Caco-2 (cell line): ENCODE measurements at regions of chr10 and their contacts with region 1.

Region 1: GRCh38 chr10:61937631-61938351 is 36.3 kb downstream of the ARID5B start:
- DNase-seq: peak; percentile 78 to 90
- H3K4me3 ChIP-seq: no peak overlapping the region
- H3K4me3 Mint-ChIP-seq: peak overlapping the region; percentile 37
- H3K27ac Mint-ChIP-seq: peak overlapping the region; percentile 33
- H3K4me1 ChIP-seq: peaks cover 88% of the 10 kb centered on the region
- H3K4me1 Mint-ChIP-seq: peaks cover 73% of the 10 kb centered on the region
- H3K27me3 ChIP-seq: no peaks in the 10 kb centered on the region
- H3K27me3 Mint-ChIP-seq: no peaks in the 10 kb centered on the region
- CTCF ChIP-seq: no peak

Region 2: DNA sequence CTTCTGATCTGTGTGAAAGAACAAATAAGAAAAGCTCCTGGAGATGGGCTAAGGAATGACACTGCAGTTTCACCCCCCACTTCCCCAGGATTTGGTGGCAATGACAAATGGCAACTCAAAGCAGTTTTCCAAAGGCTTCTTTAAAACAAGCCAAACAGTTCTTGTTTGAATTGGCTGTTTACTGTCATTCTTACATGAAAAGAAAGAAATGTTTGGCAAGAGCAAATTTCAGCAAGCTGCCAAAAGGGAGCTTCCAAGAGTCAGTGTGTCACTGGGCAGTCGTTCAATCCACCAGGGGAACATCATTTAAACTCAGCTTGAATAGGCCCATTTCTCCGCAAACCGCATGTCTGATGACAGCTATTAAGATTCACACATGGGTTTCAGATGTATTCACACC is 874.8 kb before region 1 on chr10:
- CTCF ChIA-PET with region 1: no interaction called
- POLR2A ChIA-PET with region 1: no interaction called
- intact Hi-C with region 1: loop called (anchors 10 kb)
- DNase-seq: peak; percentile 53 to 63
- H3K4me3 ChIP-seq: no peak overlapping the region
- H3K4me3 Mint-ChIP-seq: no peak overlapping the region
- H3K27ac Mint-ChIP-seq: no peak overlapping the region
- H3K4me1 ChIP-seq: peaks cover 47% of the 10 kb centered on the region
- H3K4me1 Mint-ChIP-seq: peaks cover 11% of the 10 kb centered on the region
- H3K27me3 ChIP-seq: no peaks in the 10 kb centered on the region
- H3K27me3 Mint-ChIP-seq: peaks cover 14% of the 10 kb centered on the region
- CTCF ChIP-seq: no peak

Region 3: GRCh38 chr10:61903221-61903927 is 34.4 kb before region 1 on chr10:
- CTCF ChIA-PET with region 1: interaction called, 7 read pairs
- POLR2A ChIA-PET with region 1: interaction called, 12 read pairs
- intact Hi-C with region 1: loop called (anchors 1 kb)
- DNase-seq: peak in 1 of 2 experiments; percentile 84
- H3K4me3 ChIP-seq: peak overlapping the region; percentile 97
- H3K4me3 Mint-ChIP-seq: peak overlapping the region; percentile 89
- H3K27ac Mint-ChIP-seq: peak overlapping the region; percentile 99
- H3K4me1 ChIP-seq: peaks cover 57% of the 10 kb centered on the region
- H3K4me1 Mint-ChIP-seq: peaks cover 34% of the 10 kb centered on the region
- H3K27me3 ChIP-seq: no peaks in the 10 kb centered on the region
- H3K27me3 Mint-ChIP-seq: no peaks in the 10 kb centered on the region
- CTCF ChIP-seq: peak; percentile 14 to 16

Region 4: GRCh38 chr10:61923213-61923949 is 14.4 kb before region 1 on chr10:
- CTCF ChIA-PET with region 1: interaction called, 3 read pairs
- POLR2A ChIA-PET with region 1: interaction called, 16 read pairs
- intact Hi-C with region 1: loop called (anchors 1 kb)
- DNase-seq: no peak
- H3K4me3 ChIP-seq: no peak overlapping the region
- H3K4me3 Mint-ChIP-seq: no peak overlapping the region
- H3K27ac Mint-ChIP-seq: peak overlapping the region; percentile 12
- H3K4me1 ChIP-seq: peaks cover 20% of the 10 kb centered on the region
- H3K4me1 Mint-ChIP-seq: peaks cover 43% of the 10 kb centered on the region
- H3K27me3 ChIP-seq: no peaks in the 10 kb centered on the region
- H3K27me3 Mint-ChIP-seq: no peaks in the 10 kb centered on the region
- CTCF ChIP-seq: no peak

Region 5: DNA sequence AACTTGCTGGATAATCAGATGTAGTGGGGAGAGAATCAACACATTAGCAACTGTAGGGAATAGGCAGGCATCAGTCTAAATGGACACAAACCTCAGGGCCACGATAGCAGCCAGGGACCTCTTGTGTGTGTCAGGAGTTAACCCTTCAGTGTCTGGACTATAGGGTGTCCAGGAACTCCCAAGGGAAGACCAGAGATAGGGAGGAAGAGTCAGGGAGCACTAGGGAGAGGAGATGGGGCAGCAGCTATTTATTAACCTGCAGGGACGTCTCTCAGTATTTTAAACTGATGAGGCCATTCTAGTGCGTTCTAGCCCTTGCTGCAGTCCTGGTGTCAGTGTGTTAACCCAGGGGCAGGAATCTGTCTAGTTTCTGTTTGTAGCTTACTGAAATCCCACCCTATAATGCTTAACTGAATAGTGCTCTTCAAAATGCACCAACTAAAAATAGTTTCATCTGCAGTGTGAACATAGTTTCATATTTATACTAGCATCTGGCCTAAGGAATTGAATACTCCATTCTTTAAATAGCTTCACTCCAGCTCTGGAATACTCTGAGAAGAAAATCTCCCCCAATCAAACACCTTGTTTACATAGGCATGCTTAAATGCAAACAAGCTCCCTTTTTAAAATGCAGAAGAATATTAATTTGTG is 26.4 kb after region 1 on chr10:
- CTCF ChIA-PET with region 1: no interaction called
- POLR2A ChIA-PET with region 1: interaction called, 8 read pairs
- intact Hi-C with region 1: loop called (anchors 1 kb)
- DNase-seq: peak; percentile 53 to 57
- H3K4me3 ChIP-seq: no peak overlapping the region
- H3K4me3 Mint-ChIP-seq: peak overlapping the region; percentile 51
- H3K27ac Mint-ChIP-seq: peak overlapping the region; percentile 84
- H3K4me1 ChIP-seq: peaks cover 78% of the 10 kb centered on the region
- H3K4me1 Mint-ChIP-seq: peaks cover 75% of the 10 kb centered on the region
- H3K27me3 ChIP-seq: no peaks in the 10 kb centered on the region
- H3K27me3 Mint-ChIP-seq: no peaks in the 10 kb centered on the region
- CTCF ChIP-seq: no peak

Region 6: DNA sequence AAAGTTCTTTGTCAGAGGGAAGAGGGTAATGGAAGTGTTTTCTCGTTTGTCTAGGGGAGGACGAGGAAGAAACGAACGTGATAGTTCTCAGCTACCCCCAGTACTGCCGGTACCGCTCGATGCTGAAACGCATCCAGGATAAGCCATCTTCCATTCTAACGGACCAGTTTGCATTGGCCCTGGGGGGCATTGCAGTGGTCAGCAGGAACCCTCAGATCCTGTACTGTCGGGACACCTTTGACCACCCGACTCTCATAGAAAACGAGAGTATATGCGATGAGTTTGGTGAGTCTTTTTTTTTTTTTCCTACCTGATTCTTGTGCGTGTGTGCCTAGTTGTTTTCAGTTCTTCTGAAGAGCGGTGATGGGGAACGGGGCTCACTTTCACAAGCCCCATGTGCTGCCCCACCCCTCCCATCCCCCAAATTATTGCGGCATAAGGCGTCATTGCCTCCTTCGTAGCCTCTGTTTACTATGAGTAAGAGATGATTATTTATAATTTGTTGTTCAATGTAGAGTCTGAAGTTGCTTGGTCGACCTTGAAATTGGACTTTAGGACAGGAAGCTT is 62.3 kb after region 1 on chr10:
- CTCF ChIA-PET with region 1: no interaction called
- POLR2A ChIA-PET with region 1: no interaction called
- intact Hi-C with region 1: no loop called
- DNase-seq: no peak
- H3K4me3 ChIP-seq: no peak overlapping the region
- H3K4me3 Mint-ChIP-seq: no peak overlapping the region
- H3K27ac Mint-ChIP-seq: no peak overlapping the region
- H3K4me1 ChIP-seq: peaks cover 17% of the 10 kb centered on the region
- H3K4me1 Mint-ChIP-seq: peaks cover 39% of the 10 kb centered on the region
- H3K27me3 ChIP-seq: no peaks in the 10 kb centered on the region
- H3K27me3 Mint-ChIP-seq: no peaks in the 10 kb centered on the region
- CTCF ChIP-seq: no peak

Region 7: DNA sequence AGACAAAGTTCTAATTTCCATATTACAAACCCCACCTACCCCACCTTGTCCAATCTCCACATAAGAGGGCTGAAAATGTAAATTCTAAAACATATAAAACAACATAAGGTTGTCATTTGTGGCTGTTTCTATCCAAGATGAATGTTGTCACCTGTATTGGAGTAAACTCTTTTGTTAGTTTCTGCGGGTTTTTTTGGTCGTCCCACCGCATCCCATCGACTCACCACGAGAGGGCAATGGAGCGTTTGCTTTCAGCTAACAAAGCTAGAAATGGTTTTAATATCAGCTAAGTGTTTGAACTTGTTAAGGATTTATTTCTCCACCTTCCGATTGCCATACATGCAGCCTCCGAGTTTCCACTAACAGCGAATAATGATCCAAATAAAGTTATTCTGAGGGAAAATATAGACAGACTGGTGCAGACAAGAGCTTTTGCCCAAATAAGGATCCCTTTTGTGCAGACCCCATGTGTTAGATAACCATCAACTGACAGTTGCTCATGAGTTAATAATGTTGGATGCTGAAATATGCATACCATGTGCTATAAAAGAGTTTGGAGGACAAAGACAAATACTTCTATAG is 100.9 kb after region 1 on chr10:
- CTCF ChIA-PET with region 1: interaction called, 3 read pairs
- POLR2A ChIA-PET with region 1: no interaction called
- intact Hi-C with region 1: loop called (anchors 1 kb)
- DNase-seq: peak; percentile 84 to 85
- H3K4me3 ChIP-seq: no peak overlapping the region
- H3K4me3 Mint-ChIP-seq: peak overlapping the region; percentile 50
- H3K27ac Mint-ChIP-seq: peak overlapping the region; percentile 56
- H3K4me1 ChIP-seq: peaks cover 95% of the 10 kb centered on the region
- H3K4me1 Mint-ChIP-seq: peaks cover 93% of the 10 kb centered on the region
- H3K27me3 ChIP-seq: no peaks in the 10 kb centered on the region
- H3K27me3 Mint-ChIP-seq: no peaks in the 10 kb centered on the region
- CTCF ChIP-seq: peak; percentile 93 to 98